ENCODE measurements at regions of chr12 and their contacts with region 1.

Region 1: DNA sequence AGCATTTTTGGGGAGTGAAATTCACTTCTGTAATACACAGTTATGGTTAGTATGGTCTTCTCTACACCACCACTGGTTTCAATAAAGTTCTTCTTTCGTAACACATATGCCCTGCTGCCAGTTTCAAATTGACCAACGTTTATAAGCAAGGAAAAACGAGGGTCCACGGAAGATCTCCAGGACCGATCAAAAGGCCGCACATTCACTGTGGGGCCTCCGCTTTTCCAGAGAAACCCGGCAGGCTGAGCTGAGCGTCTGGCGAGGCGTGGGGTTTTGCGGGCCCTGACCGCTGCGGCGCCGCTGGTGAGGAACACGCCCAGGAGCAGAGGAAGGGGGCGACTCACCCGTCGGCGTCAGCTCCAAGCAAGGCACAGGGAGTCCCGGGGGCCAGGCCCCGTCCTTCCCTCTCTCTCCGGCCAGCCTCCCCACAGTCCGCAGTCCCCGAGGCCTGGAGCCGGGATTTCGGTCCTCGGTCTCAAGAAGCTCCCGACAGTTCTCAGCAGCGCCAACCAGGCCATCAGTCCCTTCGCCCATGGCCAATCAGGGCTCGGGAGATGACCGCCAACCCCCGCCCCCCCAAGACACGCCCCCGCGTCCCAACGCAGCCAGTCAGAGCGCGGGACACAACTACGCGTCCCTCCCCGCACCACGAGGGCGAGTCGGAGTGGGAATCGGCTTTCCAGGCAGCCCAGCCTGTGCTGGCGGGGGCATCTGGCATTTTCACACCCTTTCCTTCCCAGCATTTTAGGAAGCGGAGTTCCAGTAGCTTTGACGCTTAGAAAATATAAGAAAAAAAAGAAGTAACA is at the start of gene MTERF2:
- DNase-seq: peak; percentile 96
- H3K4me3 ChIP-seq: peak within 1 kb of the TSS; percentile 79 to 89
- H3K27ac ChIP-seq: peak within 1 kb of the TSS; percentile 89 to 93
- H3K4me1 ChIP-seq: peaks cover 11% of the 10 kb centered on the region
- H3K27me3 ChIP-seq: no peaks in the 10 kb centered on the region
- CTCF ChIP-seq: no peak
- POLR2A ChIP-seq: peak; percentile 41
- total RNA-seq, gene MTERF2: 22.7 to 25.2 TPM

Region 2: GRCh38 chr12:106790020-106790419 is 196.8 kb before region 1 on chr12:
- intact Hi-C with region 1: no loop called
- DNase-seq: no peak
- H3K4me3 ChIP-seq: no peak overlapping the region
- H3K27ac ChIP-seq: no peak overlapping the region
- H3K4me1 ChIP-seq: no peaks in the 10 kb centered on the region
- H3K27me3 ChIP-seq: no peaks in the 10 kb centered on the region
- CTCF ChIP-seq: no peak
- POLR2A ChIP-seq: no peak

Region 3: DNA sequence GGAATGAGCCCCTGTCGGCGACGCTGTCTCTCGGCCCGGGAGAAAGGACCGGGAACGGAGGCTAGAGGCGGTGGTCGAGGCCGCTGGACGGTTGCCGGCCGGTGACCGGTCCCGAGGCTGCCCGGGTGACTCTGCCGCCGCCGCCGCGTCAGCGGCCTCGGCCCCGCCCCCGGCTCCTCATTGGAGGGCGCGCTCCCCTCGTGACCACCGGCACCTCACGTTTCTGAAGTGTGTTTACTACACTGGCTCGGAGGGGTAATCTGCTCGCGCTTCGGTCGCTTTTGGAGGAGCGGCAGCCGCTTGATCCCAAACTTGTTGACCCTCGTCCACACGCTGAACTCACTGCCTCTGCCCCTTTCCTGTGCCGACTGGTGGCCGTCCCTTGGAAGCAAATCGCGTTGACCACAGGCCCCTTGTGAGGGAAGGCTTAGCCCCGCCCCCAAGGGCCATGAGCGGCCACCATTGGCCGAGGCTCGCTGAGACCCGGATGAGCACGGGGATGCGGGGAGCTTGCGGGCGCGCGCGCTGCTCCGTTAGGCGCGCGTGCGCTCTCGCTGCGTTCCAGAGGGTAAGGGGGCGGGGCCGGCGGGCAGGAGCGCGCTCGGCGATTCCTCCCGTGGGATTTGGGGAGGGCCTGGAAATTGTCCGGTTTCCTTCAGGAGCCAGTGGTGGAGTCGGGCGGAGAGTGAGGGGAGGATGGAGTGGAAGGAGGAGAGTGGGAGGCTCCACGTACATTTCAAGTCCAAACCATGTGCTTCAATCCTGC is 106.8 kb after region 1 on chr12 and contains the start of gene CRY1:
- intact Hi-C with region 1: loop called (anchors 10 kb)
- DNase-seq: peak; percentile 97
- H3K4me3 ChIP-seq: peak within 1 kb of the TSS; percentile 90 to 93
- H3K27ac ChIP-seq: peak within 1 kb of the TSS; percentile 97 to 99
- H3K4me1 ChIP-seq: peaks cover 23% of the 10 kb centered on the region
- H3K27me3 ChIP-seq: no peaks in the 10 kb centered on the region
- CTCF ChIP-seq: no peak
- POLR2A ChIP-seq: peak; percentile 94
- total RNA-seq, gene CRY1: 63.0 to 92.0 TPM